WTC11 (cell line): ENCODE measurements at regions of chr4 and their contacts with region 1.

Region 1: GRCh38 chr4:152705903-152706302 is 26.1 kb upstream of the TMEM154 start:
- DNase-seq: no peak
- ATAC-seq: peak; percentile 70
- H3K4me3 Mint-ChIP-seq: no peak overlapping the region
- H3K27ac Mint-ChIP-seq: peak overlapping the region; percentile 25; the same call in 1 of the 2 replicates
- H3K4me1 Mint-ChIP-seq: peaks cover 66% of the 10 kb centered on the region
- H3K27me3 Mint-ChIP-seq: no peaks in the 10 kb centered on the region
- CTCF ChIP-seq: no peak

Region 2: DNA sequence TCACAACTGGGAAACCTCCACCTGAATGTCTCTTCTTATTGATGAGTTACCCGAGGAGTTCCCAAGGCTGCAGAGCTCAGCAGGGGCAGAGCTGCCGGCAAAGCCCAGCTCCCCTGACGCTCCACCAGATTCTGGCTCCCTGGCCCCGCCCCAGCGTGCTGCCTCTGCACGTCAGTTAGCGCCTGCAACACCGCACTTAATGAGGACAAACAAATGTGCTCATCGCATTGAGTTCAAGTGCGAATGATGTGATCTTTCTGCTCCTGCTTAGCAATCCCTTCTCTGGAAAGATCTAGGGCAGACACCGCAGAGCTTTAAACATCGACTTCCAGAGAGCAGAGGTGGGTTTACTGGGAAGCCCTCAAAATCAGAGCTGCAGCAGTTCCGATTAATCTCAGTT is 114.5 kb before region 1 on chr4:
- CTCF ChIA-PET with region 1: interaction called, 12 read pairs
- POLR2A ChIA-PET with region 1: no interaction called
- DNase-seq: peak; percentile 83
- ATAC-seq: peak; percentile 98
- H3K4me3 Mint-ChIP-seq: peak overlapping the region; percentile 56
- H3K27ac Mint-ChIP-seq: peak overlapping the region; percentile 32; the same call in 1 of the 2 replicates
- H3K4me1 Mint-ChIP-seq: peaks cover 13% of the 10 kb centered on the region
- H3K27me3 Mint-ChIP-seq: no peaks in the 10 kb centered on the region
- CTCF ChIP-seq: no peak

Region 3: GRCh38 chr4:152672206-152673092 is 33.5 kb before region 1 on chr4:
- CTCF ChIA-PET with region 1: interaction called, 11 read pairs
- POLR2A ChIA-PET with region 1: no interaction called
- DNase-seq: no peak
- ATAC-seq: no peak
- H3K4me3 Mint-ChIP-seq: no peak overlapping the region
- H3K27ac Mint-ChIP-seq: no peak overlapping the region
- H3K4me1 Mint-ChIP-seq: peaks cover 29% of the 10 kb centered on the region
- H3K27me3 Mint-ChIP-seq: no peaks in the 10 kb centered on the region
- CTCF ChIP-seq: no peak

Region 4: DNA sequence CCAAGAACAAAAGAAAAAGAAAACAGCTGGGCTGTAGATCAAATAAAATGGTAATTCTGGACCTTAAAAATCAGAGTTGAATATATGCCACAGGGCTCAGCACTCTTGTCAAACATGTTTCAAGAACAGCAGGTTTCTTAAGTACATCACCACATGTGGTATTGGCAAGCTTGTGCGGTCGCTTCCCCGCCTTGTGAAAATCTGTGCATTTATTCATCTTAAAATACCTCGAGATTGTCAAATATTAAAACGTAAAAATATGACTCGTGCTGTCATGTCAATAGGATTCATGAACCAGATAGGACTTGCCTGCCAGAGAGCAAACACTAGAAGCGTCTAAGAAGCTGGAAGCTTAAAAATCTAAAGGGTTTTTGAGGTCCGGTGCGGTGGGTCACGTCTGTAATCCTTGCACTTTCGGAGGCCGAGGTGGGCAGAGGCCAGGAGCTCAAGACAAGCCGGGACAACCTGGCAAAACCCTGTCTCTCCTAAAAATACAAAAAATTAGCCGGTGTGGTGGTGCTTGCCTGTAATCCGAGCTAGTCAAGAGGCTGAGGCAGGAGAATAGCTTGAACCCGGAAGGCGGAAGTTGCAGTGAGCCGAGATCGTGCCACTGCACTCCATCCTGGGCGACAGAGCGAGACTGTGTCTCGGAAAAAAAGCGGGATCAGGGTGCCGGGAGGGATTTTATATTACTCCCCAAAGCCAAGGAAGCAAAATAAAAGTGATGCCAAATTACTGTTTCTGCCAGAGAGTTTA is 14.1 kb after region 1 on chr4:
- CTCF ChIA-PET with region 1: interaction called, 15 read pairs
- POLR2A ChIA-PET with region 1: no interaction called
- DNase-seq: no peak
- ATAC-seq: peak; percentile 39
- H3K4me3 Mint-ChIP-seq: no peak overlapping the region
- H3K27ac Mint-ChIP-seq: 0 out of 2 replicates have a peak overlapping the region, but pooled peaks have one; percentile 35
- H3K4me1 Mint-ChIP-seq: peaks cover 24% of the 10 kb centered on the region
- H3K27me3 Mint-ChIP-seq: no peaks in the 10 kb centered on the region
- CTCF ChIP-seq: no peak

Region 5: DNA sequence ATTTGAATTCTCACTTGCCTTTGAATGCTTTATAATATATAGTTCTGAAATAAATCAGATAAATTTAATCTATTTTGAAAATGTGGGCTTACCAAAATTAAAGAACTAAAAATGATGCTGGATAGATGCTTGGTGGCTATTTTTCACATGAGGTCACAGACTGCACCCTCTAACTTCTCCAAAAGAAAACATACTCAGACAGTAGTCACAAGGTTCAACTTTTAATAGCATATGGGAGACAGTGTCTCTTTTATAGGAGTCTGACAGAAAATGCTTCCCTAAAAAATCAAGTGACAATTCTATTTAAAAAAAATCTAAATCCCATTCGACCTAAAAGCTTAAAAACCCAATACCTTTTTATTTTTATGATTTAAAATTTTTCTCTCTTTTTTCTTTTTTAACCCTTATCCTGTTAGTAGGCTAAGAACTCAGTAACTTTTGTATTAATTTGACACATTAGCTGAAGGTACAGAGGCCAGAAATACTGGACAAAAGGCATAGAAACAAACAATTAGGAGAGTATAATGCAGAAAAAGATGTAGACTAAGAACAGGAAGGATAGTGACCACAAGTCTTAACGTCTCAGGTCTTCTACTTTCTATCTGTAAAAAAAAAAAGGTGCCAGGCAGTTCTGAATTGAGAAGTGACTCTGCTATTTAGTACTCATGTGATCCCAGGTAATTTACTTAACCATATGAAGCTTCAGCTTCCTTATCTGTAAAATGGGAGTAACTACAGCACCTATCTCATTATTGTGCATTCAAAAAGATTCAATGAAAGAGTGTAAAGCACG is 66.0 kb after region 1 on chr4:
- CTCF ChIA-PET with region 1: no interaction called
- POLR2A ChIA-PET with region 1: no interaction called
- DNase-seq: no peak
- ATAC-seq: no peak
- H3K4me3 Mint-ChIP-seq: no peak overlapping the region
- H3K27ac Mint-ChIP-seq: no peak overlapping the region
- H3K4me1 Mint-ChIP-seq: no peaks in the 10 kb centered on the region
- H3K27me3 Mint-ChIP-seq: no peaks in the 10 kb centered on the region
- CTCF ChIP-seq: no peak

Region 6: GRCh38 chr4:153127760-153128494 is 422.0 kb after region 1 on chr4:
- CTCF ChIA-PET with region 1: interaction called, 10 read pairs
- POLR2A ChIA-PET with region 1: no interaction called
- DNase-seq: peak; percentile 91
- ATAC-seq: peak; percentile 78
- H3K4me3 Mint-ChIP-seq: peak overlapping the region; percentile 47
- H3K27ac Mint-ChIP-seq: peak overlapping the region; percentile 84
- H3K4me1 Mint-ChIP-seq: peaks cover 18% of the 10 kb centered on the region
- H3K27me3 Mint-ChIP-seq: peaks cover 2% of the 10 kb centered on the region; the same call in 1 of the 2 replicates
- CTCF ChIP-seq: peak; percentile 71